CD4-positive, alpha-beta T cell (primary cell): ENCODE measurements at regions of chr13 and their contacts with region 1.

Region 1: GRCh38 chr13:99501184-99501847 is at the start of gene TM9SF2:
- DNase-seq: peak; percentile 93 to 99 (median 96)
- ATAC-seq: peak; percentile 60
- H3K4me3 ChIP-seq: peak within 1 kb of the TSS; percentile 85
- H3K4me3 Mint-ChIP-seq: peak within 1 kb of the TSS; percentile 96
- H3K27ac ChIP-seq: peak within 1 kb of the TSS; percentile 85 to 92
- H3K27ac Mint-ChIP-seq: peak within 1 kb of the TSS; percentile 98
- H3K4me1 ChIP-seq: peaks cover 56% of the 10 kb centered on the region
- H3K4me1 Mint-ChIP-seq: peaks cover 90% of the 10 kb centered on the region
- H3K27me3 ChIP-seq: no peaks in the 10 kb centered on the region
- H3K27me3 Mint-ChIP-seq: no peaks in the 10 kb centered on the region
- CTCF ChIP-seq: no peak
- total RNA-seq, gene TM9SF2: 37.2 to 38.2 TPM

Region 2: GRCh38 chr13:98998831-98999638 is 502.3 kb before region 1 on chr13:
- CTCF ChIA-PET with region 1: no interaction called
- POLR2A ChIA-PET with region 1: no interaction called
- intact Hi-C with region 1: loop called in 1 of 2 experiments (anchors 5 kb)
- DNase-seq: peak in 10 of 14 experiments; percentile 9 to 73 (median 29)
- ATAC-seq: peak; percentile 71
- H3K4me3 ChIP-seq: no peak overlapping the region
- H3K4me3 Mint-ChIP-seq: peak overlapping the region; percentile 85
- H3K27ac ChIP-seq: peak overlapping the region in 1 of 2 donors; percentile 14
- H3K27ac Mint-ChIP-seq: peak overlapping the region; percentile 94
- H3K4me1 ChIP-seq: peaks cover 81% of the 10 kb centered on the region
- H3K4me1 Mint-ChIP-seq: peaks cover 99% of the 10 kb centered on the region
- H3K27me3 ChIP-seq: no peaks in the 10 kb centered on the region
- H3K27me3 Mint-ChIP-seq: no peaks in the 10 kb centered on the region
- CTCF ChIP-seq: no peak

Region 3: GRCh38 chr13:99200432-99201167 is 300.7 kb before region 1 on chr13 and contains the start of gene UBAC2:
- CTCF ChIA-PET with region 1: no interaction called
- POLR2A ChIA-PET with region 1: interaction called, 4 read pairs
- intact Hi-C with region 1: loop called (anchors 5 kb)
- DNase-seq: peak; percentile 90 to 100 (median 97)
- ATAC-seq: peak; percentile 79
- H3K4me3 ChIP-seq: peak within 1 kb of the TSS; percentile 99
- H3K4me3 Mint-ChIP-seq: peak within 1 kb of the TSS; percentile 95
- H3K27ac ChIP-seq: peak within 1 kb of the TSS; percentile 97 to 99
- H3K27ac Mint-ChIP-seq: peak within 1 kb of the TSS; percentile 93
- H3K4me1 ChIP-seq: peaks cover 36% of the 10 kb centered on the region
- H3K4me1 Mint-ChIP-seq: peaks cover 67% of the 10 kb centered on the region
- H3K27me3 ChIP-seq: no peaks in the 10 kb centered on the region
- H3K27me3 Mint-ChIP-seq: no peaks in the 10 kb centered on the region
- CTCF ChIP-seq: no peak
- total RNA-seq, gene UBAC2: 59.8 to 67.4 TPM

Region 4: DNA sequence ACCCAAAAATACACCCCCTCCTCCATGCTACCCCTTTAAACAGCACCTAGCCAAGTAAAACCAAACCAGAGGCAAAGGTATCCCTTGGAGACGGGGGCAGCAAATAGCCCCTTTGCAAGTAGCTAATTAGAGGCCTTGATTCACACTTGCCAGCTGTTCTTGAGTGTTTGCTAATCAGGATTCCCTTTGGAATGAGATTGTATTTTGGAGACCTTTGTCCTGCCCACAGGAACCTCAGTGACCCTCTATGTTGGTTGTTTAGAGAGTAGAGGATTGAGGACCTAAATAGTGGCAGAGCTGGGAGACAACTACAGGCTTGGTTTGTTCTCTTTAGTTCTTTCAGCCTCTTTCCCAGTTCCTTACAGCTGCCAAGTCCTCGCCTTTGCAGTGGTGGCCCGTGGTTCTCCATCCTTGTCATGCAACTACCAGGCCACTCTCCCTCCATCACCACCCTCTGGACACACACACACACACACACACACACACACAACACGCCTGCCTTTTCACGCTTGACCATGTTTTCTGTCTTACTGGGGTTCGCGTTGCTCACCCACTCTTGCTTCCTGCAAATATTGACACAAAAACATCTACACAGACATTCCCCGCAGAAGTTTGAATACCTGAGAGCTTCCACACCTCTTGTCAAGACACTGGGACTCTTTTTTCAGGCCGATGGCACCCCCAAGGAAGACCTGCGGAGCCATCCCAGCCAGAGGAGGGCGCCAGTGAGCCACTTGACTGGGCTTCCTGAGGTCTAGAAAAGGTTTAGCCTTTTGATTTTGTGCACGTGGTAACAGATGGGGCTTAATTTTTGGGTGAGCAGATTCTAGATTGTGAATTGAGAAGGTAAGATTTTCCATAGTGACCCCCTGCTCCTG is 114.2 kb before region 1 on chr13:
- CTCF ChIA-PET with region 1: no interaction called
- POLR2A ChIA-PET with region 1: no interaction called
- intact Hi-C with region 1: loop called in 1 of 2 experiments (anchors 10 kb)
- DNase-seq: peak; percentile 81 to 94 (median 88)
- ATAC-seq: peak; percentile 22
- H3K4me3 ChIP-seq: no peak overlapping the region
- H3K4me3 Mint-ChIP-seq: peak overlapping the region; percentile 21
- H3K27ac ChIP-seq: peak overlapping the region; percentile 31 to 57
- H3K27ac Mint-ChIP-seq: peak overlapping the region; percentile 88
- H3K4me1 ChIP-seq: peaks cover 67% of the 10 kb centered on the region
- H3K4me1 Mint-ChIP-seq: peaks cover 61% of the 10 kb centered on the region
- H3K27me3 ChIP-seq: no peaks in the 10 kb centered on the region
- H3K27me3 Mint-ChIP-seq: no peaks in the 10 kb centered on the region
- CTCF ChIP-seq: peak; percentile 88

Region 5: GRCh38 chr13:99516153-99516929 is 15.0 kb after region 1 on chr13:
- CTCF ChIA-PET with region 1: interaction called, 4 read pairs
- POLR2A ChIA-PET with region 1: interaction called, 15 read pairs
- intact Hi-C with region 1: no loop called
- DNase-seq: no peak
- ATAC-seq: no peak
- H3K4me3 ChIP-seq: no peak overlapping the region
- H3K4me3 Mint-ChIP-seq: no peak overlapping the region
- H3K27ac ChIP-seq: no peak overlapping the region
- H3K27ac Mint-ChIP-seq: no peak overlapping the region
- H3K4me1 ChIP-seq: peaks cover 10% of the 10 kb centered on the region
- H3K4me1 Mint-ChIP-seq: peaks cover 53% of the 10 kb centered on the region
- H3K27me3 ChIP-seq: no peaks in the 10 kb centered on the region
- H3K27me3 Mint-ChIP-seq: no peaks in the 10 kb centered on the region
- CTCF ChIP-seq: no peak

Region 6: GRCh38 chr13:100674848-100675660 is 1173.7 kb after region 1 on chr13:
- CTCF ChIA-PET with region 1: no interaction called
- POLR2A ChIA-PET with region 1: interaction called, 3 read pairs
- intact Hi-C with region 1: loop called in 1 of 2 experiments (anchors 2 kb)
- DNase-seq: peak; percentile 98 to 100 (median 100)
- ATAC-seq: peak; percentile 90
- H3K4me3 ChIP-seq: peak overlapping the region; percentile 94
- H3K4me3 Mint-ChIP-seq: peak overlapping the region; percentile 96
- H3K27ac ChIP-seq: peak overlapping the region; percentile 48 to 50
- H3K27ac Mint-ChIP-seq: peak overlapping the region; percentile 82
- H3K4me1 ChIP-seq: peaks cover 22% of the 10 kb centered on the region
- H3K4me1 Mint-ChIP-seq: peaks cover 36% of the 10 kb centered on the region
- H3K27me3 ChIP-seq: no peaks in the 10 kb centered on the region
- H3K27me3 Mint-ChIP-seq: no peaks in the 10 kb centered on the region
- CTCF ChIP-seq: peak; percentile 27